ENCODE measurements at regions of chr4 and their contacts with region 1.

Region 1: DNA sequence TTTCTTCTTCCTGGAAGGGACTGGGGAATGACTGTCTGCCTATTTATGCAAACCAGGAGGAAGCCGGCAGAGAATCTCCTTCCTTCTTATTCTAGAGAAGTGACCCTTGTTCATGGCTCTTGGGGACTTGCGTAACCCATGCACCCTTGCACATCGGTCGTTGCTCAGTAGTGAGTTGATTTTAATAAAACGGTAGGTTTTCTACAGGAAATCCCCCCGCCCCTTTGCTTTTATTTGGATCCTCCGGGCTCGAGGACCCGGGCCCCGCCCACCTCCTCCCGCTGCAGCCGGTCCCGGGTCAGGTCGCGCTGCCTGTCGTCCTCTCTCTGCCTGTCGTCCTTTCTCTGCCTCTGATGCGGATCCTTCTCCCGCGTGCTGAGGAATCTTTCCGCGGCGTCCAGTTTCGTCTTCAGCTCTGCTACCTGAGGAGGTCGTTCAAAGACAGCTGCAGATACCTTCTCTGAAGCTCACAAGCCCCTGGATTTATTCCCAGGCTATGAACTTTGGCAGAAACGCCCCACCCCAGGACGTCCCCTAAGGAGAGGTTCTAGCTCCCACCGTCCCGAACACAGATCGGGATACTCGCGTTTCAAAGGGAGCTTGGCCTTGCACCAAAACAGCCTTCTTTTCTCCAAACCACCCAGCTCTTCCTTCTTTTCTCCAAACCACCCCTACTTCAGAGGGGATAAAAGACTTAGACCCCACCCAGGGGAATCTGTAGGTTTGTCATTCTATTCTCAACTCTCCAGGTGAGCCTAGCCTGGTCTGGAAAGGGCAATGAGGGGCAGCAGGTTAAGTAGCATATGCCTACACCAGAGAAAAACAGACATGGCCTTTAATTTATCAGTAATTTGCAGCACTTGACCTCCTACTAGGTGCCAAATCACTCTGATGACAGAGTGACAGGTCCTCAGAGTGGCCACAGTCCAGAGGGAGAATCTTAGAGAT is 7.0 kb downstream of the TNIP3 start:
- DNase-seq: peak in 7 of 9 donors; percentile 13 to 37 (median 32)
- ATAC-seq: peak; percentile 44
- H3K4me3 ChIP-seq: peak overlapping the region; percentile 70
- H3K4me3 Mint-ChIP-seq: peak overlapping the region; percentile 88 to 99 (median 94)
- H3K27ac ChIP-seq: peak overlapping the region; percentile 71
- H3K27ac Mint-ChIP-seq: peak overlapping the region; percentile 74 to 99 (median 96)
- H3K4me1 ChIP-seq: peaks cover 36 to 52% of the 10 kb centered on the region in 2 donors
- H3K4me1 Mint-ChIP-seq: peaks cover 25 to 71% (median 64%) of the 10 kb centered on the region in 7 donors
- H3K27me3 ChIP-seq: no peaks in the 10 kb centered on the region
- H3K27me3 Mint-ChIP-seq: peaks cover 0 to 35% (median 0%) of the 10 kb centered on the region in 5 donors

Region 2: DNA sequence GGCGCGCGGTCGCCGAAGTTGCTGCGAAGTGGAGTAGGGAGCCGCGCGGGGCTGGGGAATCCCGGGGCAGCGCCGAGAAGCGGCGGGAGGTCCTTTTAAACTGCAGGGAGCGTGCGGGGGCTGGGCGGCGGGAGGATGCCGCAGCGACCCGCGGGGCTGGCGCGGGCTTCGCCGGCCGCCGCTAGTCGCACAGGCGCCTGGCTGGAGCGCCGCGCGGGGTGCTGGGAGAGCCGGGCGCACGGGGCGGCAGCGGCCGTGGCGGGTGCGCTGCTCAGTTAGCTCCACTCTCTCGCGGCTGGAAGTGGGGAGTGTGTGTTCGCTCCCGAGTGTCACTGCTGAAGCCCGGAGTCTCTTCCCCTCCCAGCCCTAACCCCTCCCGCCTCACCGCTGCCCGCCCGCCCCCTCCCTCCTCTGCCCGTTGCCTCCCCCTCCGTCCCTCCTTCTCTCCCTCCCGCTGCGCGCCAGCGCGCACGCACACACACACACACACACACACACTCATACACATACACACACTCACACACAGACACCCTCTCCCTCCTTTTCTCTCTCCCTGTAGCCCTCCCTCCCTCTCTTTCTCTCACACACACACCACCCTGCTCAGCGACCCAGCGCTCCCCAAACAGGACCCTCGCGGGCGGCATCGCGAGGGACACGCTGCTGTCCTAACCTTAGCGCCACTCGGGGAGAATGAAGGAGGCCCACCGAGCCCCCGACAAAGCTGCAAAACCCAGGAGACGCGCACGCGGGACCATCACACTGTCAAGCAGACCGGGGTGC is 84.7 kb before region 1 on chr4 and contains the start of gene NDNF:
- CTCF ChIA-PET with region 1: no interaction called
- POLR2A ChIA-PET with region 1: no interaction called
- intact Hi-C with region 1: loop called in 1 of 2 experiments (anchors 5 kb)
- DNase-seq: peak; percentile 13 to 76 (median 33)
- ATAC-seq: peak; percentile 71
- H3K4me3 ChIP-seq: peak within 1 kb of the TSS; percentile 64
- H3K4me3 Mint-ChIP-seq: peak within 1 kb of the TSS; percentile 83 to 95 (median 90)
- H3K27ac ChIP-seq: no peak within 1 kb of the TSS
- H3K27ac Mint-ChIP-seq: peak within 1 kb of the TSS in 5 of 9 donors; percentile 8 to 65 (median 51)
- H3K4me1 ChIP-seq: peaks cover 0 to 6% of the 10 kb centered on the region in 2 donors
- H3K4me1 Mint-ChIP-seq: peaks cover 20 to 37% (median 23%) of the 10 kb centered on the region in 7 donors
- H3K27me3 ChIP-seq: peaks cover 10% of the 10 kb centered on the region in 2 donors
- H3K27me3 Mint-ChIP-seq: peaks cover 45 to 75% (median 60%) of the 10 kb centered on the region in 5 donors
- total RNA-seq, gene NDNF: not detected

Region 3: DNA sequence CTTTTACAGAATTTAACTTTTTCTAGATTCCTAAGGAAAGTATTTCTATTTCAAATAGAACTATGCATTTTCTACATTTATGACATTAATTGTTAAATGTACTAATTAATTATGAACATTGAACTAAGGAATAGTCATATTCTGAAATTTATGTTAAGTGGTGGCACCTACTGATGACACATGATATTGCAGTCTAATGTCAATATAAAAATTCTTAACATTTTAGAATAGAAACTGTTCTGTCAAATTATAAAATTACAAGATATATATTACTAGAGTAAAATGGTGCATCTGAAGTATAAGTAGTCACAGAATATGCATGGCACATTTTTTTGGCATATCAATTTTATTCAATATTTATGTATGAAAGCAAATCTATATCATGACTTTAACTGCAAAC is 44.6 kb before region 1 on chr4:
- CTCF ChIA-PET with region 1: interaction called, 3 read pairs
- POLR2A ChIA-PET with region 1: interaction called, 3 read pairs
- intact Hi-C with region 1: loop called (anchors 2 to 5 kb)
- DNase-seq: no peak
- ATAC-seq: no peak
- H3K4me3 ChIP-seq: no peak overlapping the region
- H3K4me3 Mint-ChIP-seq: no peak overlapping the region
- H3K27ac ChIP-seq: no peak overlapping the region
- H3K27ac Mint-ChIP-seq: no peak overlapping the region
- H3K4me1 ChIP-seq: peaks cover 0 to 3% of the 10 kb centered on the region in 2 donors
- H3K4me1 Mint-ChIP-seq: peaks cover 0 to 25% (median 20%) of the 10 kb centered on the region in 7 donors
- H3K27me3 ChIP-seq: no peaks in the 10 kb centered on the region
- H3K27me3 Mint-ChIP-seq: peaks cover 0 to 29% (median 0%) of the 10 kb centered on the region in 5 donors

Region 4: GRCh38 chr4:121139533-121140222 is 17.4 kb before region 1 on chr4:
- CTCF ChIA-PET with region 1: interaction called, 7 read pairs
- POLR2A ChIA-PET with region 1: interaction called, 6 read pairs
- intact Hi-C with region 1: loop called (anchors 1 to 2 kb)
- DNase-seq: peak in 7 of 9 donors; percentile 40 to 77 (median 70)
- ATAC-seq: peak; percentile 85
- H3K4me3 ChIP-seq: no peak overlapping the region
- H3K4me3 Mint-ChIP-seq: peak overlapping the region; percentile 10 to 75 (median 44)
- H3K27ac ChIP-seq: peak overlapping the region; percentile 62
- H3K27ac Mint-ChIP-seq: peak overlapping the region; percentile 74 to 97 (median 91)
- H3K4me1 ChIP-seq: peaks cover 0 to 29% of the 10 kb centered on the region in 2 donors
- H3K4me1 Mint-ChIP-seq: peaks cover 22 to 65% (median 54%) of the 10 kb centered on the region in 7 donors
- H3K27me3 ChIP-seq: no peaks in the 10 kb centered on the region
- H3K27me3 Mint-ChIP-seq: no peaks in the 10 kb centered on the region

Region 5: GRCh38 chr4:121168446-121169281 is 11.6 kb after region 1 on chr4:
- CTCF ChIA-PET with region 1: interaction called, 4 read pairs
- POLR2A ChIA-PET with region 1: interaction called, 4 read pairs
- intact Hi-C with region 1: loop called (anchors 1 kb)
- DNase-seq: no peak
- ATAC-seq: peak; percentile 81
- H3K4me3 ChIP-seq: no peak overlapping the region
- H3K4me3 Mint-ChIP-seq: peak overlapping the region in 1 of 10 donors; percentile 6
- H3K27ac ChIP-seq: no peak overlapping the region
- H3K27ac Mint-ChIP-seq: peak overlapping the region in 3 of 9 donors; percentile 31 to 76 (median 56)
- H3K4me1 ChIP-seq: peaks cover 16 to 30% of the 10 kb centered on the region in 2 donors
- H3K4me1 Mint-ChIP-seq: peaks cover 31 to 80% (median 76%) of the 10 kb centered on the region in 7 donors
- H3K27me3 ChIP-seq: no peaks in the 10 kb centered on the region
- H3K27me3 Mint-ChIP-seq: no peaks in the 10 kb centered on the region

Region 6: DNA sequence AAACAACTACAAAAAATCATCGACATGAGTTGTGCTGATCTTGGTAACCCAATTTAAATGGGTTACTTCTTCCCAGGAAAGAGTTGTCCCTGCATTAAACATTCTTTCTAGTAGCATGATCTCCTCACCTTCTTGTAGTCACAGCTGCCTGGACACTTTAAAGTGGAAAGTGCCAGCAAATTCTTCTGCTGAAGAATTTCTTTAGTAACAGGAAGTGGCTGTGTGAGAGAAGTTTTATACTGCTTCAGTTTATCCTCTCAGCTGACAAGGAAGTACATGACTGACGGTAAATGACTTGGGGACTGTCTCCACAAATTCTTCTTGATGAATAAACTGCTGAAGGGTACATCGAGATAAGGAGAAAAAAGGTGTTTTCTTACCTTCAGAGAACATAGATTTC is 25.2 kb after region 1 on chr4:
- CTCF ChIA-PET with region 1: interaction called, 3 read pairs
- POLR2A ChIA-PET with region 1: interaction called, 63 read pairs
- intact Hi-C with region 1: loop called (anchors 1 to 2 kb)
- DNase-seq: peak in 7 of 9 donors; percentile 59 to 79 (median 67)
- ATAC-seq: peak; percentile 84
- H3K4me3 ChIP-seq: peak overlapping the region; percentile 54
- H3K4me3 Mint-ChIP-seq: peak overlapping the region; percentile 62 to 89 (median 84)
- H3K27ac ChIP-seq: peak overlapping the region; percentile 94
- H3K27ac Mint-ChIP-seq: peak overlapping the region; percentile 92 to 97 (median 95)
- H3K4me1 ChIP-seq: peaks cover 43 to 52% of the 10 kb centered on the region in 2 donors
- H3K4me1 Mint-ChIP-seq: peaks cover 52 to 93% (median 80%) of the 10 kb centered on the region in 7 donors
- H3K27me3 ChIP-seq: no peaks in the 10 kb centered on the region
- H3K27me3 Mint-ChIP-seq: no peaks in the 10 kb centered on the region

Measured in naive thymus-derived CD4-positive, alpha-beta T cell (primary cell).